ENCODE measurements at regions of chr2 and their contacts with region 1.

Region 1: GRCh38 chr2:190582736-190583506 is 48.4 kb upstream of the NEMP2 start:
- DNase-seq: no peak
- ATAC-seq: no peak
- H3K4me3 ChIP-seq: no peak overlapping the region
- H3K27ac ChIP-seq: no peak overlapping the region
- H3K4me1 ChIP-seq: no peaks in the 10 kb centered on the region; the same call in 1 of the 2 replicates
- H3K27me3 ChIP-seq: no peaks in the 10 kb centered on the region
- CTCF ChIP-seq: no peak

Region 2: DNA sequence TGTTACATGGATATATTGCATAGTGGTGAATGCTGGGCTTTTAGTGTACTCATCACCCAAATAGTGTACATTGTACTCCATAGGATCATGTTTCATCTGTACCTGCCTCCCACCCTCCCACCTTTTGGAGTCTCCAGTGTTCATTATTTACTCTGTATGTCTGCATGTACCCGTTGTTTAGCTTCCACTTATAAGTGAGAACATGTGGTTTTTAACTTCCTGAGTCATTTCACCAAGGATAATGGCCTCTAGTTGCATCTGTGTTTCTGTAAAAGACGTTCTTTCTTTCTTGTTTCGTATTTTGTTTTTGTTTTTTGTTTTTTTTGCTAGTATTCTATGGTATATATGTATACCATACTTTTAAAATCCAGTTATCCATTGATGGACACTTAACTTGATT is 627.9 kb before region 1 on chr2:
- CTCF ChIA-PET with region 1: no interaction called
- POLR2A ChIA-PET with region 1: no interaction called
- in situ Hi-C with region 1: no loop called
- intact Hi-C with region 1: no loop called
- DNase-seq: no peak
- ATAC-seq: no peak
- H3K4me3 ChIP-seq: no peak overlapping the region
- H3K27ac ChIP-seq: no peak overlapping the region
- H3K4me1 ChIP-seq: no peaks in the 10 kb centered on the region
- H3K27me3 ChIP-seq: no peaks in the 10 kb centered on the region
- CTCF ChIP-seq: no peak

Region 3: DNA sequence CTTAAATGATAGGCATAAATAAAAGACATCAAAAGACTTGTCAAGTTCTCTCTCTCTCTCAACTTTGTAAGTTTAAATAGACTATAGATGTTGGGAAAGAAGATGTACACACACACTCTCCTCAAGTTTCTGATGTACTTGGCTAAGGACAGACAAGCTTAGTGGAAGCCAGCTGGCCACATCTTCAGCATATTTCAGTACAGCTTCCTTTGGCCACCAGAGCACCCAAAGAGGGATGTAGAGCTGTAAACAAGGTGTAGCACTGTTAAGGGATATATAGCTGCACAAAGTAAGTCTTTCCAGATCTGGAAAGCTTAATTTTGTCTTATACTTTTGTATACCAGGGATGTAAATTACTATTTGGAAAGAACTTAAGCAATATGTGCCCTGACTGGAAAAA is 456.1 kb before region 1 on chr2:
- CTCF ChIA-PET with region 1: interaction called, 10 read pairs
- POLR2A ChIA-PET with region 1: no interaction called
- in situ Hi-C with region 1: no loop called
- intact Hi-C with region 1: no loop called
- DNase-seq: no peak
- ATAC-seq: no peak
- H3K4me3 ChIP-seq: no peak overlapping the region
- H3K27ac ChIP-seq: no peak overlapping the region
- H3K4me1 ChIP-seq: no peaks in the 10 kb centered on the region; the same call in 1 of the 2 replicates
- H3K27me3 ChIP-seq: no peaks in the 10 kb centered on the region
- CTCF ChIP-seq: no peak

Region 4: GRCh38 chr2:190572246-190572645 is 10.7 kb before region 1 on chr2:
- CTCF ChIA-PET with region 1: interaction called, 4 read pairs
- POLR2A ChIA-PET with region 1: interaction called, 12 read pairs
- in situ Hi-C with region 1: no loop called
- intact Hi-C with region 1: no loop called
- DNase-seq: no peak
- ATAC-seq: no peak
- H3K4me3 ChIP-seq: no peak overlapping the region
- H3K27ac ChIP-seq: no peak overlapping the region
- H3K4me1 ChIP-seq: no peaks in the 10 kb centered on the region
- H3K27me3 ChIP-seq: no peaks in the 10 kb centered on the region
- CTCF ChIP-seq: no peak

Measured in Panc1 (cell line).